ENCODE measurements at regions of chr5 and their contacts with region 1.

Region 1: GRCh38 chr5:171207256-171207847 is 101.7 kb upstream of the TLX3 start:
- DNase-seq: no peak
- ATAC-seq: peak; percentile 43
- H3K4me3 Mint-ChIP-seq: no peak overlapping the region
- H3K27ac Mint-ChIP-seq: no peak overlapping the region
- H3K4me1 Mint-ChIP-seq: peaks cover 10% of the 10 kb centered on the region
- H3K27me3 Mint-ChIP-seq: no peaks in the 10 kb centered on the region
- CTCF ChIP-seq: no peak

Region 2: GRCh38 chr5:171175746-171176145 is 31.6 kb before region 1 on chr5:
- CTCF ChIA-PET with region 1: no interaction called
- POLR2A ChIA-PET with region 1: no interaction called
- DNase-seq: no peak
- ATAC-seq: no peak
- H3K4me3 Mint-ChIP-seq: no peak overlapping the region
- H3K27ac Mint-ChIP-seq: no peak overlapping the region
- H3K4me1 Mint-ChIP-seq: no peaks in the 10 kb centered on the region
- H3K27me3 Mint-ChIP-seq: no peaks in the 10 kb centered on the region
- CTCF ChIP-seq: no peak

Region 3: DNA sequence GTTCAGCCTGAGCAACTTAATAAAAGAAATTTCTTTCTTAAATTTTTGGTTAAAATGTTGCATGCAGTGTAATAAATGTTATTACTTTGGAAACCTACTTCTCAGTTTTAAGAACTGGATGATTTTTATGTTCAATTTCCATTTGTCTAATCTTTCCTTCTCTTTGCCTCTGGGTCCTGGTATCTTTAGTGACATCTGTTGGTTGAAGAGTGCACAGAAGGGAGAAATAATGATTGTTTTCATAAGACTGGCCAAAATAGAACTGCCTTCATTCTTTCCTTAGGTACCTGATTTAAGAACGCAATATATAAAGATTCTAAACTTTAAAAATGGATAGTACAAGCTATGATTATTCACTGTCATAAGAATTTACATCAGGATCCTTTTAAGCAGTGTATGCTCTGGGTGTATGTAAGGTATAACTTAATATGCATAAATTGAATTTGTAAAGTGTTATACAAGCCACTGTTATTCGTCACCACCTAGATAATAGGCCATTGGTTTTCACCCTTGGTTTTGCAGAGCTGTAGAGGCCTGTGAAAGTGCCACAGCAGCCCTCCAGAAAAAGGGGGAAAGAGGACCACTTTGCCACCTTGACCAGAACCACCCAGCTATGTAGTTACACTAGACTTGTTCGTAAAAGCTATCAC is 18.9 kb after region 1 on chr5:
- CTCF ChIA-PET with region 1: interaction called, 12 read pairs
- POLR2A ChIA-PET with region 1: no interaction called
- DNase-seq: no peak
- ATAC-seq: no peak
- H3K4me3 Mint-ChIP-seq: no peak overlapping the region
- H3K27ac Mint-ChIP-seq: no peak overlapping the region
- H3K4me1 Mint-ChIP-seq: no peaks in the 10 kb centered on the region
- H3K27me3 Mint-ChIP-seq: no peaks in the 10 kb centered on the region
- CTCF ChIP-seq: no peak

Region 4: DNA sequence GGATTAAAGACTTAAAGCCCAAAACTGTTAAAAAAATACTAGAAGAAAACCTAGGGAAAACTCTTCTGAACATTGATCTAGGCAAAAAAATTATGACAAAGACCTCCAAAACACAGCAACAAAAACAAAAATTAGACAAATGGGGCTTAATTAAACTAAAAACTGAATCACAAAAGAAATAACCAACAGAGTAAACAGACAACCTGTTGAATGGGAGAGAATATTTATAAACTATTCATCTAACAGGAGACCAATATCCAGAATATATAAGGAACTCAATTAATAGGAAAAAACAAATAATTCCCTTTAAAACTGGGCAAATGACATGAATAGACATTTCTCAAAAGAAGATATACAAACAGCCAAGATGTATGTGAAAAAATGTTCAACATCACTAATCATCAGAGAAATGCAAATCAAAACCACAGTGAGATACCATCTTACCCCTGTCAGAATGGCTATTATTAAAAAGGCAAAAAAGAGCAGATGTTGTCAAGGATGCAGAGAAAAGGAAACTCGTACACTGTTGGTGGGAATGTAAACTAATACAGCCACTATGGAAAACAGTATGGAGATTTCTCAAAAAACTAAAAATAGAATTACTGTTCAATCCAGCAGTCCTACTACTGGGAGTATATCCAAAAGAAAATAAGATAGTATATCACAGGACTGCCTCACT is 51.5 kb after region 1 on chr5:
- CTCF ChIA-PET with region 1: no interaction called
- POLR2A ChIA-PET with region 1: no interaction called
- DNase-seq: no peak
- ATAC-seq: no peak
- H3K4me3 Mint-ChIP-seq: no peak overlapping the region
- H3K27ac Mint-ChIP-seq: no peak overlapping the region
- H3K4me1 Mint-ChIP-seq: no peaks in the 10 kb centered on the region
- H3K27me3 Mint-ChIP-seq: no peaks in the 10 kb centered on the region
- CTCF ChIP-seq: no peak

Region 5: GRCh38 chr5:171310212-171310818 is 103.0 kb after region 1 on chr5:
- CTCF ChIA-PET with region 1: interaction called, 11 read pairs
- POLR2A ChIA-PET with region 1: no interaction called
- DNase-seq: peak; percentile 80
- ATAC-seq: no peak; the same call in 1 of the 2 replicates
- H3K4me3 Mint-ChIP-seq: peak overlapping the region; percentile 54
- H3K27ac Mint-ChIP-seq: no peak overlapping the region
- H3K4me1 Mint-ChIP-seq: peaks cover 43% of the 10 kb centered on the region
- H3K27me3 Mint-ChIP-seq: peaks cover 98% of the 10 kb centered on the region
- CTCF ChIP-seq: peak; percentile 66

Region 6: DNA sequence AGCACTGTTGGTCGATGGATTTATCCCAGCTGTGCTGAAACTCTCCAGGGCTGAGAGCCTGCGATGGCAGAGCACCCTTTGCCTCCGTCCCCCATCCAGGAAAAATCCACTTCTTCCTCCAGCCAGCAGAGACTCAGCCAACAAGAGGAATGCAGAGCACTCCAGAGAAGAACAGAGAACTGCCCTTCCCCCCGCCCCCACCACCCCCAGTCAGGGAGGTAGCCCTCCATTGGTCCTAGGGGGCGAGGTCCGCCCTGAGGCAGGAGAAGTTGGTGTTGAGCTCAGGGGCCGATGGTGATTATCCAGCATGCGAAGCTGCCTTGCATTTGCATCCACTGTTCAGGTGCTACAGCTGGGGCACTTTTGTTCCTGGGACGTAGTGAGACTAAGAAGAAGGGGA is 110.7 kb after region 1 on chr5:
- CTCF ChIA-PET with region 1: interaction called, 12 read pairs
- POLR2A ChIA-PET with region 1: no interaction called
- DNase-seq: peak; percentile 69
- ATAC-seq: peak; percentile 61
- H3K4me3 Mint-ChIP-seq: peak overlapping the region; percentile 40
- H3K27ac Mint-ChIP-seq: no peak overlapping the region
- H3K4me1 Mint-ChIP-seq: peaks cover 60% of the 10 kb centered on the region
- H3K27me3 Mint-ChIP-seq: peaks cover 100% of the 10 kb centered on the region
- CTCF ChIP-seq: no peak

Measured in WTC11 (cell line).